Activated CD8-positive, alpha-beta T cell treated with anti-CD3 and anti-CD28 coated beads, Interleukin-2, amount 10 ng/mL, durations not matched to agents 7 days and 5 days (primary cell): ENCODE measurements at regions of chr9 and their contacts with region 1.

Region 1: DNA sequence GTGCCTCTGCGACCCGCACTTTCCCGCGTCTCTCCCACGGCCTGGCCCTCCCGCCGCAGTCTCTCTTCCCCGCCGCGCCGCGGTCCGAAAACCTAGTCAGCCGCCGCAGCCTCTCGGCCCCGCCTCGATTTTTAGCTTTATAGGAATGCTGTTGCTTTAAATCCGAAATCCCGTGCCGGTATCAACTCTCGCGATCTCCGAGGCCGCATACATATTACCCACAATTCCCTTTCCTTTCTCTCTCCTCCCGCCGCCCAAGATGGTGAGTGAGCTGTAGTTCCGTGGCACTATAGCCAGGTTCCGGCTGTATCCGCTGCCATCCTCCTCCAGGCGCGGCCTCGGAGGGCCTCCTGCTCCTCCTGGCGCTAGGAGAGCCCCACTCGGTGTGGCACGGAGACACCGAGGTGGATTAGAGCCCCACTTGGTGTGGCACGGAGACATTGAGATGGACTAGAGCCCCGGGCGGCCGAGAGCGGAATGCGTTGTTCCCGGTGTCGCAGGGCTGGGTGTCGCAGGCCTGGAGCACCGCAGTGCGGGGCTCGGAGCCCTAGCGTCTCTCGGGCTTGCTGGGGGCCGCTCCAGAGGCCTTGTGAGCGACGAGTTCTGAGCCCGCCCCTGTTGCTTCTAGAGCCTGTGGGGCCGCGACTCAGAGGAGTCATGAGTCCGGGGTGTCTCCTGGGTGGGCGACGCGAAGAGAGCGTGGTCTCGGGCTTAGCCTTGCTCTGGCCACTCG is at the starts of genes MED22 and RPL7A:
- DNase-seq: peak; percentile 96
- ATAC-seq: peak; percentile 84
- H3K4me3 Mint-ChIP-seq: peak within 1 kb of the TSS; percentile 99
- H3K27ac Mint-ChIP-seq: peak within 1 kb of the TSS; percentile 98
- H3K4me1 Mint-ChIP-seq: peaks cover 59% of the 10 kb centered on the region
- H3K27me3 Mint-ChIP-seq: no peaks in the 10 kb centered on the region
- total RNA-seq, gene MED22: 29.1 to 29.6 TPM
- total RNA-seq, gene RPL7A: 1,894 to 1,933 TPM

Region 2: GRCh38 chr9:133238851-133239532 is 109.2 kb before region 1 on chr9:
- CTCF ChIA-PET with region 1: interaction called, 10 read pairs
- POLR2A ChIA-PET with region 1: interaction called, 3 read pairs
- DNase-seq: peak; percentile 75
- ATAC-seq: peak; percentile 86
- H3K4me3 Mint-ChIP-seq: peak overlapping the region; percentile 36
- H3K27ac Mint-ChIP-seq: no peak overlapping the region
- H3K4me1 Mint-ChIP-seq: peaks cover 7% of the 10 kb centered on the region
- H3K27me3 Mint-ChIP-seq: peaks cover 14% of the 10 kb centered on the region

Region 3: DNA sequence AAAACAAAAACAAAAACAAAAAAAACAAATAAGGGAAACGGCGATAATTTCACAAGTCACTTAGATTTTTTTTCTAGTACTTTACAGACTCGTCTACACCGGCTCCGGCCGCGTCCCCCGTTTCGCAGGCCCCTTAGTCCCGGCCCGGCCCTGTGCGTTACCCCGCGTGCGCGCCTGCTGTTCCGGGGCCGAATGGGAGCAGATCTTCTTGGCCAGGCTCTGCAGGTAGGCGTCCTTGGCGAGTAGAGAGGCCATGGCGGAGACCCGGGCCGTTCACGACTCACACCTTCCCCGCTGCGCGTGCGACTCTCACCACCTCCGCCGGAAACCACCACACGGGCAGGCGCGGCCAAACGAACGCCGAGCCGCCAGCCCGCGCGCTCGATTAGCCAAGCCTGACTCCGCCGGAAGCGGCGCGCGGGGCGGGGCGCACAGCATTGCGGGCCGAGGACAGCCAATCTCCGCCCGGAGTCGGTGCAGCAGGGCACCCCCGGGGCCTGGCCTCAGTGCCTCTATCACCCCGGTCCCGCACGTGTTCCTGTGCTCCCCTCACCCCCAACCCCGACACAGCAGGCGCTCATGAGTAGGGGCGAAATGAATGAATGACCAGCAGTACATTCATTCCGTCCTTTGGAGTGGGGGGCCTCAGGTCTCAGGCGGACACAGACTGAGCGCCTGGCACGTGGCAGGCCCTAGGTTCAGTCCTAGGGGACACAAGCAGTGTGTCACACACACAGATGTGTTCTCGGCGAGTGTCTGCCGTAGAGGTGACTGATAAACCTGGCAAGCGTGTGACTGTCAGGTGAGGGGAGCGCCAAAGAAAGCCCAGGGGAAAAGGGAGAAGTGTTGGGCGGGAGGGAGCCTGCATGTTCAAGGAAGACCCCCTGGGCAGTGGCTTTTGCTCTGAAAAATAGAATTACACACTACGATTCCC is 12.0 kb before region 1 on chr9 and contains the start of gene SURF6:
- CTCF ChIA-PET with region 1: interaction called, 9 read pairs
- POLR2A ChIA-PET with region 1: interaction called, 21 read pairs
- DNase-seq: peak; percentile 94
- ATAC-seq: peak; percentile 91
- H3K4me3 Mint-ChIP-seq: peak within 1 kb of the TSS; percentile 97
- H3K27ac Mint-ChIP-seq: peak within 1 kb of the TSS; percentile 96
- H3K4me1 Mint-ChIP-seq: peaks cover 61% of the 10 kb centered on the region
- H3K27me3 Mint-ChIP-seq: no peaks in the 10 kb centered on the region
- total RNA-seq, gene SURF6: 20.1 to 21.4 TPM